ENCODE measurements at regions of chr6 and their contacts with region 1.

Region 1: DNA sequence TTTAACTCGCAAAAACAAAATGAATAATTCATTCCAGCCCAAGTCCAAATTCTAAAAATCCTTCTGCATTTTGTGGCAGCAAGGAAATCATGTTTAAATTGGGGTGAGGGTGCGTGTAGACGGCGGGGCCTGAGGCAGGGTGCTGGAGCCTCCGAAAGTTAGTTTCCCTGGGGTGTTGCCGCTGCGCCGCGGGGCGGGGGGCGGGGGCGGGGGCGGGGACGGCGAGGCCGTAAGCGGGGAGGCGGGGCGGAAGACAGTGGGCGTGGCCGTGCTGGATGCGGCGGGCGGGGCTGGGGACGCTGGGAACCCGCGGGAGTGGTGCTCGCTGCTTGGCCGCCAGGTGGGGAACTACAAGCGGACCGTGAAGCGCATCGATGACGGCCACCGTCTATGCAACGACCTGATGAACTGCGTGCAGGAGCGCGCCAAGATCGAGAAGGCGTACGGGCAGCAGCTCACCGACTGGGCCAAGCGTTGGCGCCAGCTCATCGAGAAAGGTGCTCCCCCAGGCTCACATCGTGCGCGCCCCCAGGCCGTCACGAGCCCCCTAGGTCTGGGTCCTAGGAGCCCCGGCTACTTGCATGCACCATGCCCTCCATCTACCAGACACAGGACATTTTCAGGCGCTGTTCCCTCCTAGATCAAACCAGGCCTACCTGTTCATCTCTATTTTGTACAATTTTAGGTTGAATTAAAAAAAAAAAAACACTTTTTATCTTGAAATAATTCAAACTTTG is 29.0 kb downstream of the SPDEF start:
- DNase-seq: peak; percentile 64
- H3K4me3 ChIP-seq: peak overlapping the region in 3 of 4 donors; percentile 25 to 49 (median 27)
- H3K27ac ChIP-seq: peak overlapping the region in 2 of 4 donors; percentile 58 to 59
- H3K4me1 ChIP-seq: peaks cover 0 to 14% (median 11%) of the 10 kb centered on the region in 3 donors
- H3K27me3 ChIP-seq: no peaks in the 10 kb centered on the region
- CTCF ChIP-seq: peak; percentile 67 to 84 (median 74)
- POLR2A ChIP-seq: no peak

Region 2: GRCh38 chr6:34436803-34437643 is 90.1 kb before region 1 on chr6:
- intact Hi-C with region 1: no loop called
- DNase-seq: no peak
- H3K4me3 ChIP-seq: no peak overlapping the region
- H3K27ac ChIP-seq: no peak overlapping the region
- H3K4me1 ChIP-seq: no peaks in the 10 kb centered on the region
- H3K27me3 ChIP-seq: no peaks in the 10 kb centered on the region
- CTCF ChIP-seq: no peak
- POLR2A ChIP-seq: no peak

Region 3: GRCh38 chr6:34608321-34609091 is 81.3 kb after region 1 on chr6:
- intact Hi-C with region 1: loop called (anchors 5 kb)
- DNase-seq: no peak
- H3K4me3 ChIP-seq: no peak overlapping the region
- H3K27ac ChIP-seq: no peak overlapping the region
- H3K4me1 ChIP-seq: peaks cover 0 to 6% (median 0%) of the 10 kb centered on the region in 3 donors
- H3K27me3 ChIP-seq: no peaks in the 10 kb centered on the region
- CTCF ChIP-seq: no peak
- POLR2A ChIP-seq: no peak